ENCODE measurements at regions of chr12 and their contacts with region 1.

Region 1: DNA sequence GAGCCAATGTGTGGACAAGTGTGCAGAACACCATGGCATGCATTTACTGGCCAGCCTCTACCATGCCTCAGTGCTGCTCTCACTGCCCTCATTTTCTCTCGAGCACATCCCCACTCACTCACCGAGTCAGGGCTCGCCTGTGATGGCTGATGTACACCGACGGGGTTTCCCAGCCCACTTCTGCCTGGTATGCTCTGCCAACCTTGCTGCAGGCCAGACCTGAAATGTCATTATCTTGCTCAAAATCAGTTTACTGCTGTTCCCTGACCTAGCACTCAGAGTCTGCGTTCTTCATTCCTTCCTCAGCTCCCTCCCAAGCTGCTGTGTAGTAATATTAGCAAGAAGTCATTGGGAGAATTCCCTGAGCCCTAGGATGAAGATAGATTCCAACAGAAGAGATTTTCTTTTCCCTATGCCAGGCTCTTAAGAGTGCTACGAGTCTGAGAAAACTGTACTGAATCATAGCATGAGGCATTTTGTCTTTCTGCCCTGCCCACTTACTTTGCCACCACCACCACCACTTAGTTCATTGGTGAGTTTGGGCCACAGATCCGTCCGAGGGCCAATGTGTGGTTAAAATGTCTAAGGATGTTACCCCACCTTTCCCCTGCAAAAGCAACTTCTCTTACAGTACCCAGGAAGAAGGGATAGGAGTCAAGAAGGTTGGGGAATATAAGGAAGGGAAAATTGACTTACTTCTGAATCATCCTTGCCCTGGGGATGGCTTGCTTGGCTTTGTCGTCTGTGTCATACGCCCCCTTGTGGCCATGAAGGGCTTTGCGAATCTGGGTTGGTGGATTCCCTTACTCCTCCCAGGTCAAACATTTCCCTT is 51.0 kb downstream of the BMAL2 start:
- DNase-seq: peak; percentile 85
- H3K4me3 Mint-ChIP-seq: no peak overlapping the region
- H3K27ac Mint-ChIP-seq: peak overlapping the region; percentile 48
- H3K4me1 Mint-ChIP-seq: peaks cover 22% of the 10 kb centered on the region
- H3K27me3 Mint-ChIP-seq: no peaks in the 10 kb centered on the region
- CTCF ChIP-seq: peak; percentile 83

Region 2: DNA sequence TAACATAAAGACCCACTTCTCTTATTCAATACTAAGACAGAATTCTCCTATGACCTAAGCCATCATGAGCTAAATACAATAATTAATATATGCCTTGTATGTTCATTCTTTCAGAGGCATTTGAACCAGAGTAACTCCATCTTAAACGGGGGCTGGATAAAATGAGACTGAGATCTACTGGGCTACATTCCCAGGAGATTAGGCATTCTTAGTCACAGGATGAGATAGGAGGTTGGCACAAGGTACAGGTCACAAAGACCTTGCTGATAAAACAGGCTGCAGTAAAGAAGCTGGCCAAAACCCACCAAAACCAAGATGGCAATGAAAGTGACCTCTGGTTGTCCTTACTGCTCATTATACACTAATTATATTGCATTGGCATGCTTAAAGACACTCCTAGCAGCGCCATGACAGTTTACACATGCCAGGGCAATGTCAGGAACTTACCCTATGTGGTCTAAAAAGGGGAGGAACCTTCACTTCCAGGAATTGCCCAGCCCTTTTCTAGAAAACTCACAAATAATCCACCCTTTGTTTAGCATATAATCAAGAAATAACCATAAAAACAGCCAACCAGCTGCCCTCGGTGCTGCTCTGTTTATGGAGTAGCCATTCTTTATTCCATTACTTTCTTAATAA is 927.6 kb before region 1 on chr12:
- CTCF ChIA-PET with region 1: no interaction called
- intact Hi-C with region 1: loop called (anchors 5 kb)
- DNase-seq: no peak
- H3K4me3 Mint-ChIP-seq: no peak overlapping the region
- H3K27ac Mint-ChIP-seq: no peak overlapping the region
- H3K4me1 Mint-ChIP-seq: no peaks in the 10 kb centered on the region
- H3K27me3 Mint-ChIP-seq: peaks cover 17% of the 10 kb centered on the region
- CTCF ChIP-seq: no peak

Region 3: GRCh38 chr12:27332407-27333301 is 51.0 kb before region 1 on chr12 and contains the start of gene BMAL2:
- CTCF ChIA-PET with region 1: interaction called, 5 read pairs
- intact Hi-C with region 1: loop called (anchors 2 kb)
- DNase-seq: peak; percentile 67
- H3K4me3 Mint-ChIP-seq: peak within 1 kb of the TSS; percentile 81
- H3K27ac Mint-ChIP-seq: peak within 1 kb of the TSS; percentile 98
- H3K4me1 Mint-ChIP-seq: peaks cover 53% of the 10 kb centered on the region
- H3K27me3 Mint-ChIP-seq: no peaks in the 10 kb centered on the region
- CTCF ChIP-seq: no peak
- total RNA-seq, gene BMAL2: 68.2 and 71.2 TPM in 2 replicates